CD8-positive, alpha-beta T cell (primary cell): ENCODE measurements at regions of chr9 and their contacts with region 1.

Region 1: GRCh38 chr9:4679268-4680172 is at the start of gene CDC37L1:
- DNase-seq: peak; percentile 98 to 100 (median 99)
- ATAC-seq: peak; percentile 86
- H3K4me3 ChIP-seq: peak within 1 kb of the TSS; percentile 70 to 94
- H3K4me3 Mint-ChIP-seq: no peak within 1 kb of the TSS
- H3K27ac ChIP-seq: peak within 1 kb of the TSS; percentile 92 to 96
- H3K27ac Mint-ChIP-seq: no peak within 1 kb of the TSS
- H3K4me1 ChIP-seq: peaks cover 20% of the 10 kb centered on the region
- H3K4me1 Mint-ChIP-seq: peaks cover 12% of the 10 kb centered on the region
- H3K27me3 ChIP-seq: no peaks in the 10 kb centered on the region
- H3K27me3 Mint-ChIP-seq: no peaks in the 10 kb centered on the region
- CTCF ChIP-seq: peak; percentile 87
- total RNA-seq, gene CDC37L1: 35.1 to 36.1 TPM

Region 2: GRCh38 chr9:3118080-3118479 is 1561.4 kb before region 1 on chr9:
- CTCF ChIA-PET with region 1: no interaction called
- POLR2A ChIA-PET with region 1: no interaction called
- intact Hi-C with region 1: no loop called
- DNase-seq: no peak
- ATAC-seq: no peak
- H3K4me3 ChIP-seq: no peak overlapping the region
- H3K4me3 Mint-ChIP-seq: no peak overlapping the region
- H3K27ac ChIP-seq: no peak overlapping the region
- H3K27ac Mint-ChIP-seq: no peak overlapping the region
- H3K4me1 ChIP-seq: no peaks in the 10 kb centered on the region
- H3K4me1 Mint-ChIP-seq: no peaks in the 10 kb centered on the region
- H3K27me3 ChIP-seq: no peaks in the 10 kb centered on the region
- H3K27me3 Mint-ChIP-seq: peaks cover 4% of the 10 kb centered on the region
- CTCF ChIP-seq: no peak

Region 3: GRCh38 chr9:4297151-4297785 is 382.3 kb before region 1 on chr9:
- CTCF ChIA-PET with region 1: no interaction called
- POLR2A ChIA-PET with region 1: interaction called, 3 read pairs
- intact Hi-C with region 1: loop called in 1 of 2 experiments (anchors 1 kb)
- DNase-seq: peak in 6 of 9 experiments; percentile 27 to 68 (median 33)
- ATAC-seq: peak; percentile 18
- H3K4me3 ChIP-seq: peak overlapping the region; percentile 67 to 81
- H3K4me3 Mint-ChIP-seq: peak overlapping the region; percentile 97
- H3K27ac ChIP-seq: peak overlapping the region in 1 of 2 experiments; percentile 73
- H3K27ac Mint-ChIP-seq: peak overlapping the region; percentile 87
- H3K4me1 ChIP-seq: peaks cover 12% of the 10 kb centered on the region
- H3K4me1 Mint-ChIP-seq: peaks cover 21% of the 10 kb centered on the region
- H3K27me3 ChIP-seq: peaks cover 0 to 12% of the 10 kb centered on the region in 2 experiments
- H3K27me3 Mint-ChIP-seq: peaks cover 43% of the 10 kb centered on the region
- CTCF ChIP-seq: no peak

Region 4: DNA sequence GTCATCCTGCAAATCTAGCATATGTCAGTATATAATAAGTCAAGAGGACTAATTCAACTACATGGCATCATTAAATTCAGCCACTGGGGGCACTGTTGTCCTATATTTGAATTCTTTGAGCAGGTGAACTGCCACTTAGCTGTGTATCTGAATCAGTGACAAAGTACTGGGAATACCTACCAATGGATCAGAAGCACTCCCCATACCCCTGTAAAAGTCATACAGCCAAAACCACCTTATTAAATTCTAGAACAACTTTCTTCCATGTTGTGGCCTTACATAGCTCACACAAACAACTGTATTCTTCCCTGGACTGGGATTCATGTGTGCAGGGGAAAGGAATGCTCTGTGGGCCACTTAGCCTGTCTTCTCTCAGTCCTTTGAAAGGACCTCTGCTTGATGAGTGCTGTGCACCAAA is 74.8 kb before region 1 on chr9:
- CTCF ChIA-PET with region 1: no interaction called
- POLR2A ChIA-PET with region 1: interaction called, 6 read pairs
- intact Hi-C with region 1: loop called in 1 of 2 experiments (anchors 5 kb)
- DNase-seq: peak in 8 of 9 experiments; percentile 46 to 78 (median 70)
- ATAC-seq: peak; percentile 74
- H3K4me3 ChIP-seq: no peak overlapping the region
- H3K4me3 Mint-ChIP-seq: no peak overlapping the region
- H3K27ac ChIP-seq: no peak overlapping the region
- H3K27ac Mint-ChIP-seq: peak overlapping the region; percentile 81
- H3K4me1 ChIP-seq: peaks cover 22% of the 10 kb centered on the region
- H3K4me1 Mint-ChIP-seq: peaks cover 43% of the 10 kb centered on the region
- H3K27me3 ChIP-seq: no peaks in the 10 kb centered on the region
- H3K27me3 Mint-ChIP-seq: no peaks in the 10 kb centered on the region
- CTCF ChIP-seq: peak; percentile 34

Region 5: GRCh38 chr9:4662108-4662988 is 17.2 kb before region 1 on chr9 and contains the start of gene PLPP6:
- CTCF ChIA-PET with region 1: interaction called, 13 read pairs
- POLR2A ChIA-PET with region 1: interaction called, 31 read pairs
- intact Hi-C with region 1: loop called (anchors 1 kb)
- DNase-seq: peak; percentile 49 to 92 (median 78)
- ATAC-seq: peak; percentile 78
- H3K4me3 ChIP-seq: peak within 1 kb of the TSS; percentile 74 to 88
- H3K4me3 Mint-ChIP-seq: peak within 1 kb of the TSS; percentile 98
- H3K27ac ChIP-seq: peak within 1 kb of the TSS; percentile 67 to 70
- H3K27ac Mint-ChIP-seq: peak within 1 kb of the TSS; percentile 98
- H3K4me1 ChIP-seq: peaks cover 54% of the 10 kb centered on the region
- H3K4me1 Mint-ChIP-seq: peaks cover 66% of the 10 kb centered on the region
- H3K27me3 ChIP-seq: no peaks in the 10 kb centered on the region
- H3K27me3 Mint-ChIP-seq: no peaks in the 10 kb centered on the region
- CTCF ChIP-seq: peak; percentile 59
- total RNA-seq, gene PLPP6: 4.4 TPM

Region 6: DNA sequence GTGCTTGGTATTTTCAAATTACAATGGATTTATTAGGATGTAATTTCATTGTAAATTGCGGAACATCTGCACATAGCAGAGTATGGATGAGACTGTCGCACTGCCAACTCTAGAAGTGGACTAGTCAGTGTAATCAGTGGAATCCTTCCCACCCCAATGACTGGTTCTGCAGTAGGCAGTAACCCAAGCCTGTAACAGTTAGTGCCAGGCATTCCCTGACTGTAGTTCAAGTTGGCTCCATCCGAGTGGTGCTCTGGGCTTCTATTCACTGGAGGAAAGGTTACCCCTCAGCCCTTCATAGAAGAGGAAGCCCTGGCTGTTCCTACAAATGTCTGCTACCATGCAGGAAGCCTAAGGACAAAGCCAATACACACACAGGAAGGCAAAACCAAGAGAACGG is 38.3 kb after region 1 on chr9:
- CTCF ChIA-PET with region 1: no interaction called
- POLR2A ChIA-PET with region 1: no interaction called
- intact Hi-C with region 1: no loop called
- DNase-seq: no peak
- ATAC-seq: no peak
- H3K4me3 ChIP-seq: no peak overlapping the region
- H3K4me3 Mint-ChIP-seq: no peak overlapping the region
- H3K27ac ChIP-seq: no peak overlapping the region
- H3K27ac Mint-ChIP-seq: no peak overlapping the region
- H3K4me1 ChIP-seq: no peaks in the 10 kb centered on the region
- H3K4me1 Mint-ChIP-seq: no peaks in the 10 kb centered on the region
- H3K27me3 ChIP-seq: no peaks in the 10 kb centered on the region
- H3K27me3 Mint-ChIP-seq: no peaks in the 10 kb centered on the region
- CTCF ChIP-seq: no peak

Region 7: DNA sequence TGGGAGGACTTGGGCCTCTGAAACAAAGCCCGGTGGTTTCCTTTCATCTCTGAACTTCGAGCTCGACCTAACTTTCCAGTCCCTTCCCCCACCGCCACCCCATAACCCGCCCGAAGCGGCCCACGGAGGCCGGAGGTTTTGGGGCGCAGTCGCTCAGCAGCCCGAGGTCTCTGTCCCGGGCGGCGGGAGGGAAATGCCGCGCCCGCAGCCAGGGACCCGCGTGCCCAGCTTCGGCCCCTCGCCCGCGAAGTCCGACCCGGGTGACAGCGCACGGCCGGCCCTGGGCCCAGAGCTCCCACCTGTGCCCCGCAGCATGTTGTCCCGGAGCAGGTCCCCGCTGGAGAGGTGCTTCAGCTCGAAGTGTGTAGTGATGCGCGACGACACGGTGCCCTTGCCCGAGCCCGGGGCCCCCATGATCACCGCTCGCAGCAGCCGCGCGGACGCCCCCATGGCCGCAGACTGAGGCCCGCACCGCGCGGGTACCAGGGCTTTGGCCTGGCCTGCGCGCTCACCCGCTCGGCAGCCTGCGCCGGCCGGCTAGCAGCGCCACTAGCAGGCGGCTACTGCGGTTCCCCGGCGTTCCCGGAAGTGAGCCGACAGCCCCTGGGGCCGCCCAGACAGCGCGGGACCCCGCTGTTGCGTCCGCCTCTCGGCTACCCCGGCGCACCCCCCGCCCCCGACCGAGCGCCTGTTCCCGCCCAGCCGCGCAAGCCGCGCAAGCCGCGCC is 61.3 kb after region 1 on chr9 and contains the start of gene AK3:
- CTCF ChIA-PET with region 1: no interaction called
- POLR2A ChIA-PET with region 1: interaction called, 20 read pairs
- intact Hi-C with region 1: loop called (anchors 1 kb)
- DNase-seq: peak; percentile 71 to 94 (median 86)
- ATAC-seq: peak; percentile 93
- H3K4me3 ChIP-seq: peak within 1 kb of the TSS; percentile 76 to 97
- H3K4me3 Mint-ChIP-seq: peak within 1 kb of the TSS; percentile 87
- H3K27ac ChIP-seq: peak within 1 kb of the TSS; percentile 70 to 86
- H3K27ac Mint-ChIP-seq: peak within 1 kb of the TSS; percentile 96
- H3K4me1 ChIP-seq: peaks cover 30% of the 10 kb centered on the region
- H3K4me1 Mint-ChIP-seq: peaks cover 37% of the 10 kb centered on the region
- H3K27me3 ChIP-seq: no peaks in the 10 kb centered on the region
- H3K27me3 Mint-ChIP-seq: no peaks in the 10 kb centered on the region
- CTCF ChIP-seq: no peak
- total RNA-seq, gene AK3: 15.2 to 18.8 TPM

Region 8: DNA sequence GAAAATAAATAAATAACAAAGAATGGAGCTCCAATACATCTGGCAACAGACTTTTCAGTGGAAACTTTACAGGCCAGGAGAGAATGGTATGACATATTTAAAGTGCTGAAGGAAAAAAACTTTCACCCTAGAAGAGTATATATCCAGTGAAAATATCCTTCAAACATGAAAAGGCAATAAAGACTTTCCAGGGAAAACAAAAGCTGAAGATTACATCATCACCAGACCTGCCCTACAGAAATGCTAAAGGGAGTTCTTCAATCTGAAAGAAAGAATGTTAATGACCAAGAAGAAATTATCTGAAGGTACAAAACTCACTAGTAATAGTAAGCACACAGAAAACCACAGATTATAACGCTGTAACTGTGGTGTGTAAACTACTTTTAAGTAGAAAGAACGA is 104.9 kb after region 1 on chr9:
- CTCF ChIA-PET with region 1: no interaction called
- POLR2A ChIA-PET with region 1: no interaction called
- intact Hi-C with region 1: no loop called
- DNase-seq: no peak
- ATAC-seq: no peak
- H3K4me3 ChIP-seq: no peak overlapping the region
- H3K4me3 Mint-ChIP-seq: no peak overlapping the region
- H3K27ac ChIP-seq: no peak overlapping the region
- H3K27ac Mint-ChIP-seq: no peak overlapping the region
- H3K4me1 ChIP-seq: no peaks in the 10 kb centered on the region
- H3K4me1 Mint-ChIP-seq: no peaks in the 10 kb centered on the region
- H3K27me3 ChIP-seq: peaks cover 0 to 2% of the 10 kb centered on the region in 2 experiments
- H3K27me3 Mint-ChIP-seq: peaks cover 30% of the 10 kb centered on the region
- CTCF ChIP-seq: no peak

Region 9: DNA sequence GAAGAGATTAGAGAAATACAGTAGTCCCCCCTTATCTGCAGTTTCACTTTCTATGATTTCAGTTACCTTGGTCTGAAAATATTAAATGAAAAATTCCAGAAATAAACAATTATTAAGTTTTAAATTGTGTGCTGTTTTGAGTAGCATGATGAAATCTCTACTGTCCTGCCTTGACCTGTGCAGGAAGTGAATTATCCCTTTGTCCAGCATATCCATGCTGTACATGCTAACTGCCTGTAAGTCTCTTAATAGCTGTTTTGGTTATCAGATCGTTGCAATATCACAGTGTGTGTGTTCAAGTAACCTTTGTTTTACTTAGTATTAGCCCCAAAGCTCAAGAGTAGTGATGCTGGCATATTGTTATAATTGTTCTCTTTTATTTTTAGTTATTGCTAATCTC is 294.4 kb after region 1 on chr9:
- CTCF ChIA-PET with region 1: no interaction called
- POLR2A ChIA-PET with region 1: no interaction called
- intact Hi-C with region 1: no loop called
- DNase-seq: no peak
- ATAC-seq: no peak
- H3K4me3 ChIP-seq: no peak overlapping the region
- H3K4me3 Mint-ChIP-seq: no peak overlapping the region
- H3K27ac ChIP-seq: no peak overlapping the region
- H3K27ac Mint-ChIP-seq: no peak overlapping the region
- H3K4me1 ChIP-seq: peaks cover 8% of the 10 kb centered on the region
- H3K4me1 Mint-ChIP-seq: no peaks in the 10 kb centered on the region
- H3K27me3 ChIP-seq: no peaks in the 10 kb centered on the region
- H3K27me3 Mint-ChIP-seq: no peaks in the 10 kb centered on the region
- CTCF ChIP-seq: no peak

Region 10: DNA sequence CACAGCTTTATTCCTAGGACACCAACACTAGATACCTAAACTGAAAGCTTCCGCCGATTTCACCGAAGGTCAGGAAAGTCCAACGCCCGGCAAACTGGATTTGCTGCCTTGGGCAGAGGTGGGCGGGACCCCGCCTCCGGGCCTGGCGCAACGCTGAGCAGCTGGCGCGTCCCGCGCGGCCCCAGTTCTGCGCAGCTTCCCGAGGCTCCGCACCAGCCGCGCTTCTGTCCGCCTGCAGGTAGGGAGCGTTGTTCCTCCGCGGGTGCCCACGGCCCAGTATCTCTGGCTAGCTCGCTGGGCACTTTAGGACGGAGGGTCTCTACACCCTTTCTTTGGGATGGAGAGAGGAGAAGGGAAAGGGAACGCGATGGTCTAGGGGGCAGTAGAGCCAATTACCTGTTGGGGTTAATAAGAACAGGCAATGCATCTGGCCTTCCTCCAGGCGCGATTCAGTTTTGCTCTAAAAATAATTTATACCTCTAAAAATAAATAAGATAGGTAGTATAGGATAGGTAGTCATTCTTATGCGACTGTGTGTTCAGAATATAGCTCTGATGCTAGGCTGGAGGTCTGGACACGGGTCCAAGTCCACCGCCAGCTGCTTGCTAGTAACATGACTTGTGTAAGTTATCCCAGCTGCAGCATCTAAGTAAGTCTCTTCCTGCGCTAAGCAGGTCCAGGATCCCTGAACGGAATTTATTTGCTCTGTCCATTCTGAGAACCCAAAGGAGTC is 771.0 kb after region 1 on chr9 and contains the start of gene CD274:
- CTCF ChIA-PET with region 1: no interaction called
- POLR2A ChIA-PET with region 1: no interaction called
- intact Hi-C with region 1: loop called (anchors 10 kb)
- DNase-seq: peak; percentile 53 to 92 (median 74)
- ATAC-seq: peak; percentile 93
- H3K4me3 ChIP-seq: peak within 1 kb of the TSS; percentile 60 to 91
- H3K4me3 Mint-ChIP-seq: peak within 1 kb of the TSS; percentile 88
- H3K27ac ChIP-seq: peak within 1 kb of the TSS; percentile 94 to 96
- H3K27ac Mint-ChIP-seq: peak within 1 kb of the TSS; percentile 95
- H3K4me1 ChIP-seq: peaks cover 17% of the 10 kb centered on the region
- H3K4me1 Mint-ChIP-seq: peaks cover 51% of the 10 kb centered on the region
- H3K27me3 ChIP-seq: no peaks in the 10 kb centered on the region
- H3K27me3 Mint-ChIP-seq: no peaks in the 10 kb centered on the region
- CTCF ChIP-seq: peak; percentile 55
- total RNA-seq, gene CD274: 3.4 to 3.7 TPM

Region 11: GRCh38 chr9:6008169-6008979 is 1328.9 kb after region 1 on chr9:
- CTCF ChIA-PET with region 1: no interaction called
- POLR2A ChIA-PET with region 1: no interaction called
- intact Hi-C with region 1: loop called in 1 of 2 experiments (anchors 2 kb)
- DNase-seq: peak; percentile 89 to 99 (median 93)
- ATAC-seq: peak; percentile 72
- H3K4me3 ChIP-seq: peak overlapping the region; percentile 75 to 77
- H3K4me3 Mint-ChIP-seq: peak overlapping the region; percentile 85
- H3K27ac ChIP-seq: peak overlapping the region; percentile 82 to 94
- H3K27ac Mint-ChIP-seq: peak overlapping the region; percentile 89
- H3K4me1 ChIP-seq: peaks cover 32% of the 10 kb centered on the region
- H3K4me1 Mint-ChIP-seq: peaks cover 54% of the 10 kb centered on the region
- H3K27me3 ChIP-seq: no peaks in the 10 kb centered on the region
- H3K27me3 Mint-ChIP-seq: no peaks in the 10 kb centered on the region
- CTCF ChIP-seq: no peak